A673 (cell line): ENCODE measurements at regions of chr7 and their contacts with region 1.

Region 1: GRCh38 chr7:90857603-90858002 is 261.5 kb downstream of the CDK14 start:
- DNase-seq: peak; percentile 12
- H3K4me3 ChIP-seq: no peak overlapping the region
- H3K27ac ChIP-seq: no peak overlapping the region
- H3K4me1 ChIP-seq: peaks cover 3% of the 10 kb centered on the region
- H3K27me3 ChIP-seq: no peaks in the 10 kb centered on the region
- CTCF ChIP-seq: no peak; the same call in 1 of the 2 replicates

Region 2: GRCh38 chr7:90579171-90579688 is 278.4 kb before region 1 on chr7:
- CTCF ChIA-PET with region 1: no interaction called
- POLR2A ChIA-PET with region 1: no interaction called
- intact Hi-C with region 1: no loop called
- DNase-seq: no peak
- H3K4me3 ChIP-seq: no peak overlapping the region
- H3K27ac ChIP-seq: no peak overlapping the region
- H3K4me1 ChIP-seq: no peaks in the 10 kb centered on the region
- H3K27me3 ChIP-seq: no peaks in the 10 kb centered on the region
- CTCF ChIP-seq: no peak

Region 3: GRCh38 chr7:90788052-90788451 is 69.6 kb before region 1 on chr7:
- CTCF ChIA-PET with region 1: interaction called, 19 read pairs
- POLR2A ChIA-PET with region 1: no interaction called
- intact Hi-C with region 1: no loop called
- DNase-seq: peak; percentile 43
- H3K4me3 ChIP-seq: no peak overlapping the region
- H3K27ac ChIP-seq: peak overlapping the region; percentile 47
- H3K4me1 ChIP-seq: peaks cover 29% of the 10 kb centered on the region
- H3K27me3 ChIP-seq: no peaks in the 10 kb centered on the region
- CTCF ChIP-seq: no peak